Dorsolateral prefrontal cortex (tissue), 120 donors: ENCODE measurements at regions of chr10 and their contacts with region 1.

Region 1: DNA sequence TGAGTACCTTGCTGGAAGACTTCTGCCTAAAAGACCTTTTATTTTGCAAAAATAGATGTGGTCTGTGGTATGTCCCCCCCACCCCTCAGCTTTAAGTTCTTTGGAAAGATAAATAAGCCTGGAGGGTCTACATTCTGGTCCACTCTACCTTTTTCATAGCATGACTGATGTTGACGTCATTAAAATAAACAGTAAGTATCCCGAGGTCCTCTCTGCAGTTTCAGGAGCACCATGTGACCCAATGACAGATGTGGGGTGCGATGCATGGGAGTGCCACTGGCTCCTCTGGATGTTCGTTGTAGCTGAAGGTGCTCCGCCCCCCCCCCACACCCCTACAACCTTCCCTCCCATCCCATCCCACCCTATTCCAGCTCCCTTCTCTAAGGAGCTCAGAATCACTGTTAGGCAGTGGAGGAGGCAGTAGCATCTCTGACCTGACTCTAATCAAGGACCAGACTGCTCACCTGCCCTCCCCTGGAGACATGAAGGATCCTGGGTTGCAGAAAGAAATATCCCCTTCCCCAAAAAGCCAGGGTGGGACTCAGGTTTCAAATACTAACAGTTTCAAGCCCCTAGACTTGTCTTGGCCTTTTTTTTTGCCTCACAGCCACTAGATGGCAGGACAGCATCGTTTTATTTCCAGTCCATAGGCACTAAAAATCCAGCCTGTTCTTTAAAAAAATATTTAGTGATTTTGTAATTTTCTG is 25.1 kb downstream of the CASP7 start:
- DNase-seq: peak in 1 of 10 donors; percentile 36
- H3K4me3 ChIP-seq: no peak overlapping the region
- H3K27ac ChIP-seq: peak overlapping the region in 5 of 59 donors; percentile 25 to 74 (median 55)
- H3K27me3 ChIP-seq: no peaks in the 10 kb centered on the region
- CTCF ChIP-seq: peak; percentile 54 to 85 (median 74)

Region 2: DNA sequence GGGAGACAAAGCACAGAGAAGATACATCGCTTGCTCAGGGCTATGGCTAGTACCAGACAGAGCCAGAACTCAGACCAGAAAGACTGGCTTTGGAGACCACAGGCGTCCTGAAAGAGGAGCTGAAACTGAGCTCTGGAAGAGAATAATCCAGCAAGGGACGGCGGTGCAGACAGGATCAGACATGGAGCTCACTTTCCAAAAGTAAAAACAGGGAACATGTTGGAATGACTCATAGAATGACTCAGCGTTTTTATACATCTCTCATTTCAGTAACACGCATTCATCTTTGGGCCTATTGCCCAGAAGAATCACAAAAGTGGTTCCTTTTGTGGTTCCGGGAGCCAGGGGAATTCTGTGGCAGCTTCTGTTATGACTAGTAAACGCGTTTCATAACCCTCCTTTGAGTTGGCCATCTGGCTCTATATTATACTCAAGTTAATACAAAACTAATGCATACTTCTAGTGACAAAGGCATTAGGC is 83.9 kb after region 1 on chr10:
- intact Hi-C with region 1: loop called (anchors 10 kb)
- DNase-seq: peak in 3 of 10 donors; percentile 26 to 54 (median 48)
- H3K4me3 ChIP-seq: no peak overlapping the region
- H3K27ac ChIP-seq: peak overlapping the region in 49 of 59 donors; percentile 25 to 84 (median 67)
- H3K27me3 ChIP-seq: no peaks in the 10 kb centered on the region
- CTCF ChIP-seq: no peak

Region 3: GRCh38 chr10:113802997-113803396 is 98.2 kb after region 1 on chr10:
- intact Hi-C with region 1: loop called in 1 of 2 experiments (anchors 5 kb)
- DNase-seq: no peak
- H3K4me3 ChIP-seq: no peak overlapping the region
- H3K27ac ChIP-seq: peak overlapping the region in 14 of 59 donors; percentile 3 to 64 (median 28)
- H3K27me3 ChIP-seq: no peaks in the 10 kb centered on the region
- CTCF ChIP-seq: no peak

Region 4: GRCh38 chr10:113823389-113823788 is 118.6 kb after region 1 on chr10:
- intact Hi-C with region 1: no loop called
- DNase-seq: no peak
- H3K4me3 ChIP-seq: no peak overlapping the region
- H3K27ac ChIP-seq: no peak overlapping the region
- H3K27me3 ChIP-seq: no peaks in the 10 kb centered on the region
- CTCF ChIP-seq: no peak

Region 5: DNA sequence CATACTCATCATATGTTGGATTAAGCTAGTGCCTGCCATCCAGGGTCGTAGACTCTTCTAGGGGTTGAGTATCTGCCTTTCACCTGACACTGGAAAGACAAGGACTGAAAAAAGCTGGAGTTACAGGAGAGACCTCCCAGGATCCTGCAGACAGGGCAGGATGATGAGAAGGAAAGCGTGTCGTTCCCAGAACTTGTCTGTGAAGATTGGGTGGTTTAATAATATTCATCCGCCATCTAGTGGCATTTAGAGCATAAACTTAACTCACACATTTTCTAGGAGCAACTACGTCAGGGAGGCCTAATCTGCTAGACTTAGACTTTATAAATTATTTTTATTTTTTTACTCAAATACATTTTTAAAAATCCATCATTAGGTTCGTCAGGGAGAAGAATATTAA is 398.5 kb after region 1 on chr10:
- intact Hi-C with region 1: loop called (anchors 1 to 5 kb)
- DNase-seq: peak in 1 of 10 donors; percentile 11
- H3K4me3 ChIP-seq: peak overlapping the region in 1 of 59 donors; percentile 7
- H3K27ac ChIP-seq: no peak overlapping the region
- H3K27me3 ChIP-seq: no peaks in the 10 kb centered on the region
- CTCF ChIP-seq: peak; percentile 48 to 91 (median 78)